ENCODE measurements at regions of chr17 and their contacts with region 1.

Region 1: GRCh38 chr17:77429919-77430752 is 289.4 kb downstream of the SEC14L1 start:
- DNase-seq: peak; percentile 67
- ATAC-seq: peak; percentile 37
- H3K4me3 Mint-ChIP-seq: no peak overlapping the region
- H3K27ac Mint-ChIP-seq: peak overlapping the region; percentile 63
- H3K4me1 Mint-ChIP-seq: peaks cover 96% of the 10 kb centered on the region
- H3K27me3 Mint-ChIP-seq: no peaks in the 10 kb centered on the region
- CTCF ChIP-seq: no peak

Region 2: DNA sequence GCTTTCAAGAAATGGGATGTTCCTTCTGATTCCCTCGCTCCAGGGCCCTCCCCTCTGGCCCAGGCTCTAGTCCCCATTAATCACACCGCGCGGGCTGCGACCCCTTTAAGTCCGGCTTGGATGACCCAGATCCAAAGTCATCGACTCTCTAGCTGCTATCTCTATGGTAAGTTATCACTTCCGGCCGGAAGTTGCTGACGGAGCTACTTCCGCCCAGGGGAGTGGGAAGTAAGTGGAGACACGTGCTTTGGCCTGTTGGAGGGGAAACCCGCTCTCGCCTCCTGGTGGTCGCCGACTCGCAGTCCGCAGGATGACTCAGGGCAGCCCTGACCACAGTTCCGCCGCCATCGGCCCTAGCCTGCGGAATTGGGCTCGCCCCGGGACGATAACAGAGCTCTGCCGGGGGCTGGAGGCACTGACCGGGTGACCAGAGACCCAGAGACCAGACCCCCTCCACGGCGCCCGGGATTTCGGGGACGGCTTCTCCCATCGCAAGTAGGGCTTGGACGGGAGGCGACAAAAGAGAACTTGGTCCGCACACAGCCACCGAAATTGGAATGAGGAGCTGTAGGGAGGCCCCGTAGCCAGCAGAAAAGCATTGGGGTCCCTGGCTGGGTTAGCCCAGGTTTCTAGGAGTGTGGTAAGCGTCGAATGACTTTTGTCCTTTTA is 341.5 kb before region 1 on chr17:
- CTCF ChIA-PET with region 1: no interaction called
- POLR2A ChIA-PET with region 1: interaction called, 10 read pairs
- intact Hi-C with region 1: no loop called
- DNase-seq: peak; percentile 84
- ATAC-seq: peak; percentile 89
- H3K4me3 Mint-ChIP-seq: peak overlapping the region; percentile 95
- H3K27ac Mint-ChIP-seq: peak overlapping the region; percentile 95
- H3K4me1 Mint-ChIP-seq: peaks cover 52% of the 10 kb centered on the region
- H3K27me3 Mint-ChIP-seq: peaks cover 3% of the 10 kb centered on the region
- CTCF ChIP-seq: no peak

Region 3: GRCh38 chr17:77331301-77331864 is 98.8 kb before region 1 on chr17:
- CTCF ChIA-PET with region 1: interaction called, 47 read pairs
- POLR2A ChIA-PET with region 1: interaction called, 14 read pairs
- intact Hi-C with region 1: loop called (anchors 1 kb)
- DNase-seq: peak; percentile 90
- ATAC-seq: peak; percentile 91
- H3K4me3 Mint-ChIP-seq: peak overlapping the region; percentile 76
- H3K27ac Mint-ChIP-seq: peak overlapping the region; percentile 78
- H3K4me1 Mint-ChIP-seq: peaks cover 57% of the 10 kb centered on the region
- H3K27me3 Mint-ChIP-seq: no peaks in the 10 kb centered on the region
- CTCF ChIP-seq: peak; percentile 32

Region 4: GRCh38 chr17:77404812-77405581 is 25.1 kb before region 1 on chr17:
- CTCF ChIA-PET with region 1: interaction called, 85 read pairs
- POLR2A ChIA-PET with region 1: interaction called, 66 read pairs
- intact Hi-C with region 1: loop called (anchors 1 kb)
- DNase-seq: peak; percentile 60
- ATAC-seq: peak; percentile 70
- H3K4me3 Mint-ChIP-seq: peak overlapping the region; percentile 89
- H3K27ac Mint-ChIP-seq: peak overlapping the region; percentile 96
- H3K4me1 Mint-ChIP-seq: peaks cover 94% of the 10 kb centered on the region
- H3K27me3 Mint-ChIP-seq: no peaks in the 10 kb centered on the region
- CTCF ChIP-seq: no peak

Region 5: DNA sequence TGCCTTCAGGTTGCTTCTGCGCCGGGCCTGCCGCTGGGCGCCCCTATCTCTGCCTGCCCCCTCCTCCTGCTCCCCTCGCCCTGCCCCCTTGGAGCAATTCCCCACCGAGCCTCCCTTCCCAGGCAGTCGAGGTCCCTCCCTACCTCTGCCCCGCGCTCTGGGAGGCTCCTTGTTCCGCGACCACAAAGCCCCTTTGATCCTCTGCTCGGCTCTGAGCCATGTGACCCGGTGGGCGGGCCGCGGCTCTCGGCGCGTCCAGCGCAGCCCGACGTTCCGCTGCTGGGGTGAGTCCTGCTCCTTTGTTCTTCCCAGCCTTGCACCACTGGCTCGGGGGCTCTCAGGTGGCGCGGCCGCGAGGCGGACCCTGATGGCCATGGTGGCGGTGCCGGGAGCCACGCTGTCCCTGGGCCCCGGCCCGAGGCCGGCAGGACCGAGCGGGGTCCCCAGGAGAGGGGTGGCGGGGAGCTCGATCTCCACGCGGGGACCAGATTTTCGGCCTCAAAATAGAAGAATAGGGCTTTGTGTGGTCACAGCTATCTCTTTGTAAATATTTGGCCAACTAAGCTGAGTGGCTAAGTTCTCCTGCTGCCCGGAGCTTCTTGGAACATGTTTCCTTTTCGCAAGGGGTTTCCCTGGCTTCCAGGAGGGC is 21.2 kb after region 1 on chr17:
- CTCF ChIA-PET with region 1: interaction called, 16 read pairs
- POLR2A ChIA-PET with region 1: interaction called, 831 read pairs
- intact Hi-C with region 1: no loop called
- DNase-seq: peak; percentile 65
- ATAC-seq: peak; percentile 59
- H3K4me3 Mint-ChIP-seq: peak overlapping the region; percentile 95
- H3K27ac Mint-ChIP-seq: peak overlapping the region; percentile 99
- H3K4me1 Mint-ChIP-seq: peaks cover 82% of the 10 kb centered on the region
- H3K27me3 Mint-ChIP-seq: no peaks in the 10 kb centered on the region
- CTCF ChIP-seq: no peak

Region 6: DNA sequence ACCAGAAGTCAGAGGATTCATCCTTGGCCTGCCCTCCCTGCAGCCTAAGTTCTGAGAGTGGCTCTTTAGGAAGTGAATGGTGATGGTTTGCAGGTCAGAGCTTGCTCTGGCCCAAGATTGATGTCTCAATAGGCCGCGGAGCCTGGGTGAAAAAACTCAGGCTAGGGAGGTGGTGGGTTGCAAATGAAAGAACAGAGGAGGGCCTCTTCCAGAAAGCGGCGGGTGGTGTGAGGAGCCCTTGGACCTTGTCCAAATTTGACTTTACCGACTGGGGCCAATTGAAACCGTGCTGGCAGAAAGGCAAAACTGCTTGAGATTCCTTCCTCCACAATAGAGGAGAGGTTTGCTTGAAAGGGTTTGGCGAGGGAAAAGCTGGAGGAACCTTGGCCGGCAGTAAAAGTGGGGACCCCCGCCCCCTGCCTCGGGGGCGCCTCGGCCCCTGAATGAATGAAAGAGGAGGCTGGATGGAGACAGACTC is 41.9 kb after region 1 on chr17:
- CTCF ChIA-PET with region 1: interaction called, 32 read pairs
- POLR2A ChIA-PET with region 1: interaction called, 831 read pairs
- intact Hi-C with region 1: loop called (anchors 5 kb)
- DNase-seq: no peak
- ATAC-seq: no peak
- H3K4me3 Mint-ChIP-seq: peak overlapping the region; percentile 72
- H3K27ac Mint-ChIP-seq: peak overlapping the region; percentile 84
- H3K4me1 Mint-ChIP-seq: peaks cover 97% of the 10 kb centered on the region
- H3K27me3 Mint-ChIP-seq: no peaks in the 10 kb centered on the region
- CTCF ChIP-seq: no peak

Region 7: GRCh38 chr17:78013683-78014467 is 583.7 kb after region 1 on chr17:
- CTCF ChIA-PET with region 1: interaction called, 7 read pairs
- POLR2A ChIA-PET with region 1: no interaction called
- intact Hi-C with region 1: loop called (anchors 5 kb)
- DNase-seq: no peak
- ATAC-seq: peak; percentile 54
- H3K4me3 Mint-ChIP-seq: no peak overlapping the region
- H3K27ac Mint-ChIP-seq: no peak overlapping the region
- H3K4me1 Mint-ChIP-seq: peaks cover 2% of the 10 kb centered on the region
- H3K27me3 Mint-ChIP-seq: no peaks in the 10 kb centered on the region
- CTCF ChIP-seq: peak; percentile 52

Measured in activated B cell treated with CpG ODN at 0.5 μM for 24 hours (primary cell).